ENCODE measurements at regions of chr5 and their contacts with region 1.

Region 1: DNA sequence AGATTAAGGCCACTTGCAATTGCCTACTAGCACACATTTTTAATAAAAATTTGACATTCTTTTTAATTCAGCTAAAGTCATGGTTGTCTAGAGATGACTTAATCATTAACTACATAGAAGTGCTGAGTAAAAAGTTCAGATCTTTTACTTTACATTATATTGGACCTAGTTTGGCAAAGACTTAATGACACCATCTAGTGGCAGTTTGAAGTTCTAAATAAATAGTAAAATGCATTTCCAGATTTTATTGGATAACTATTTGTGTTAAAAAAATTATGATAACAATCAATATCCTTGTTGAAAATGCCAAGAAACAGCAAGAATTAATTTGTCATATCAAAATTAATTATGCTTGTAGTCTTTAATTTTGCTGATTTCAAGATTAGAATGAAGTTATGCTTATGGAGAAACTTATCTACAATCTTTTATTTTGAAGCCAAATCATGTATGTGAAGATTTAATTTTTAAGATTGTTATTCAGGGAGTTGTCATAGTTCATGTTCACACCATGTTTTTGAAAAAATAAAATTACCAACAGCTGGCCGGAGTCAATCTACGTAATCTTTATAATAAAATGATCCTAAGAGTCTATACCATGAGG is 69.6 kb upstream of the PJA2 start:
- DNase-seq: peak in 2 of 9 donors; percentile 6 to 15
- ATAC-seq: no peak
- H3K4me3 ChIP-seq: no peak overlapping the region
- H3K4me3 Mint-ChIP-seq: no peak overlapping the region
- H3K27ac ChIP-seq: no peak overlapping the region
- H3K27ac Mint-ChIP-seq: no peak overlapping the region
- H3K4me1 ChIP-seq: no peaks in the 10 kb centered on the region
- H3K4me1 Mint-ChIP-seq: peaks cover 0 to 3% (median 0%) of the 10 kb centered on the region in 7 donors
- H3K27me3 ChIP-seq: no peaks in the 10 kb centered on the region
- H3K27me3 Mint-ChIP-seq: peaks cover 0 to 14% (median 9%) of the 10 kb centered on the region in 5 donors

Region 2: DNA sequence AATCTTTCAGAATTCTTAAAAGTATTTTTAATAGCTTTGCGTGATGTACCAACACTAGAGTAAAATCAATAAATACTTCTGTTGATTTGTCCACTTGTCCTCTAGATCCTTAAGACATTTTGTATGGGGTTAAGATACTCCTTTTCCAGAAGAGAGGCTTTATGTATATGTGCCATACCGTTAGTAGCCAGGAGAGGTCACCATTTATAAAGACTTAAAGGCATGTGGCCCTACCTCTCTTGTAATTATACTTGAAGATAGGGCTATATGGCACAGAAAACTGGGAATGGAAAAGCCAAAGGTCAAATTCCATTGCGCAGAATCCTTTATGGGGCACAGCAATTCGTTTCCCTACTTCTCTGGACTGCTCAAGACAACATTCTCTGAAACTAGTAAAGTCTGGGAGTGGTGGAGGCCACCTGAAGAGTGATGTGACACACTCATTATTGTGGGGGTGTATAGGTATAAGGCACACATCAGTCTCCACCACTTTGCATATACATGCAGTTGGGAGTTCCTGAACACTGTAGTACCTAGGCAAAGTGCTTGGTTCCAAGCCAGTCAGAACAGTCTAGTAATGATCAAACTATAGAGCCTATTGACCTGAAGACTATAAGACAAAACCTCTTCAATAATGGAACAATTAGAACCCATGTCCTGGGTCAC is 957.4 kb before region 1 on chr5:
- CTCF ChIA-PET with region 1: interaction called, 3 read pairs
- POLR2A ChIA-PET with region 1: no interaction called
- intact Hi-C with region 1: loop called (anchors 1 to 10 kb)
- DNase-seq: peak in 5 of 9 donors; percentile 4 to 29 (median 16)
- ATAC-seq: peak; percentile 73
- H3K4me3 ChIP-seq: no peak overlapping the region
- H3K4me3 Mint-ChIP-seq: no peak overlapping the region
- H3K27ac ChIP-seq: no peak overlapping the region
- H3K27ac Mint-ChIP-seq: no peak overlapping the region
- H3K4me1 ChIP-seq: no peaks in the 10 kb centered on the region
- H3K4me1 Mint-ChIP-seq: peaks cover 0 to 3% (median 0%) of the 10 kb centered on the region in 7 donors
- H3K27me3 ChIP-seq: no peaks in the 10 kb centered on the region
- H3K27me3 Mint-ChIP-seq: peaks cover 0 to 21% (median 13%) of the 10 kb centered on the region in 5 donors

Region 3: GRCh38 chr5:108642167-108642906 is 837.0 kb before region 1 on chr5:
- CTCF ChIA-PET with region 1: no interaction called
- POLR2A ChIA-PET with region 1: no interaction called
- intact Hi-C with region 1: loop called (anchors 1 to 2 kb)
- DNase-seq: peak in 8 of 9 donors; percentile 16 to 52 (median 32)
- ATAC-seq: peak; percentile 83
- H3K4me3 ChIP-seq: no peak overlapping the region
- H3K4me3 Mint-ChIP-seq: peak overlapping the region in 4 of 10 donors; percentile 4 to 73 (median 34)
- H3K27ac ChIP-seq: no peak overlapping the region
- H3K27ac Mint-ChIP-seq: peak overlapping the region in 1 of 9 donors; percentile 33
- H3K4me1 ChIP-seq: no peaks in the 10 kb centered on the region
- H3K4me1 Mint-ChIP-seq: peaks cover 0 to 4% (median 3%) of the 10 kb centered on the region in 7 donors
- H3K27me3 ChIP-seq: no peaks in the 10 kb centered on the region
- H3K27me3 Mint-ChIP-seq: peaks cover 0 to 8% (median 4%) of the 10 kb centered on the region in 5 donors

Region 4: GRCh38 chr5:108681079-108681921 is 798.1 kb before region 1 on chr5:
- CTCF ChIA-PET with region 1: no interaction called
- POLR2A ChIA-PET with region 1: no interaction called
- intact Hi-C with region 1: loop called (anchors 1 to 2 kb)
- DNase-seq: peak in 6 of 9 donors; percentile 23 to 58 (median 44)
- ATAC-seq: peak; percentile 88
- H3K4me3 ChIP-seq: no peak overlapping the region
- H3K4me3 Mint-ChIP-seq: no peak overlapping the region
- H3K27ac ChIP-seq: no peak overlapping the region
- H3K27ac Mint-ChIP-seq: no peak overlapping the region
- H3K4me1 ChIP-seq: no peaks in the 10 kb centered on the region
- H3K4me1 Mint-ChIP-seq: no peaks in the 10 kb centered on the region
- H3K27me3 ChIP-seq: no peaks in the 10 kb centered on the region
- H3K27me3 Mint-ChIP-seq: peaks cover 0 to 9% (median 0%) of the 10 kb centered on the region in 5 donors

Region 5: DNA sequence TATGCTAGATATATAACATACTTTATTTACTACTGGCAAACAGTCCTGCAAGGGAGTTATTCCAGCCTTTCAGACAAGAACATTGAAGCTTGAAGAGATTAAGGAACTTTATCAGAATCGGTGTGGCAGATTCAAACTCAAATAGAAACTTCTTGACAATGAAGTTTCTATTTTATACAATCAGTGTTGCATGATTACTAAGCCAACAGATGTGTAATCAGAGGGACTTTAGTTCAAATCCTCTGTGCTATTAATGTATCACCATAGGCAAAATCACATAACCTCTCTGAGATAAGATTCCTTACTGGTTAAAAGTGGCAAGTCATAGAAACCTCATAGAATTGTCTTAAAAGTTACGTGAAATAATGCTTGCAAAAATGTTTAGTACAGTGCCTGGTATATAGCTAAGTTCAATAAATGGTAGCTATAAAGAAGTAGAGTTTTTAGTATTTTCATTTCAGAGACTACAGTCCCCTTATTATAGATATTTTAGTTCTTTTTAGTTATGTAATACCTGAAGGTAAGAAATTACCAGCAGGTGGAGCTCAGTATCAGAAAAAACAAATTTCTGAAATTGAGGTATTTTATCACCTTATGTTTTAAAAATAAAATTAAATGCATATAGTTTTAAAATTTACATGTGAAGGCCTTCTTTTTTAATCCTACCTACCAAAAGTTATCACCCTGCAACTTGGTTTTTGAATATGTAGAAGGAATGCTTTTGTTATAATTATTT is 559.6 kb before region 1 on chr5:
- CTCF ChIA-PET with region 1: no interaction called
- POLR2A ChIA-PET with region 1: no interaction called
- intact Hi-C with region 1: loop called (anchors 1 to 10 kb)
- DNase-seq: peak in 2 of 9 donors; percentile 0 to 3
- ATAC-seq: no peak
- H3K4me3 ChIP-seq: no peak overlapping the region
- H3K4me3 Mint-ChIP-seq: no peak overlapping the region
- H3K27ac ChIP-seq: no peak overlapping the region
- H3K27ac Mint-ChIP-seq: no peak overlapping the region
- H3K4me1 ChIP-seq: no peaks in the 10 kb centered on the region
- H3K4me1 Mint-ChIP-seq: peaks cover 0 to 5% (median 0%) of the 10 kb centered on the region in 7 donors
- H3K27me3 ChIP-seq: no peaks in the 10 kb centered on the region
- H3K27me3 Mint-ChIP-seq: no peaks in the 10 kb centered on the region

Region 6: GRCh38 chr5:109439590-109439989 is 39.8 kb before region 1 on chr5:
- CTCF ChIA-PET with region 1: no interaction called
- POLR2A ChIA-PET with region 1: no interaction called
- intact Hi-C with region 1: no loop called
- DNase-seq: no peak
- ATAC-seq: no peak
- H3K4me3 ChIP-seq: no peak overlapping the region
- H3K4me3 Mint-ChIP-seq: no peak overlapping the region
- H3K27ac ChIP-seq: no peak overlapping the region
- H3K27ac Mint-ChIP-seq: no peak overlapping the region
- H3K4me1 ChIP-seq: no peaks in the 10 kb centered on the region
- H3K4me1 Mint-ChIP-seq: no peaks in the 10 kb centered on the region
- H3K27me3 ChIP-seq: no peaks in the 10 kb centered on the region
- H3K27me3 Mint-ChIP-seq: peaks cover 0 to 9% (median 0%) of the 10 kb centered on the region in 5 donors

Region 7: GRCh38 chr5:109900911-109901627 is 421.7 kb after region 1 on chr5:
- CTCF ChIA-PET with region 1: no interaction called
- POLR2A ChIA-PET with region 1: no interaction called
- intact Hi-C with region 1: no loop called
- DNase-seq: no peak
- ATAC-seq: no peak
- H3K4me3 ChIP-seq: no peak overlapping the region
- H3K4me3 Mint-ChIP-seq: no peak overlapping the region
- H3K27ac ChIP-seq: no peak overlapping the region
- H3K27ac Mint-ChIP-seq: no peak overlapping the region
- H3K4me1 ChIP-seq: no peaks in the 10 kb centered on the region
- H3K4me1 Mint-ChIP-seq: peaks cover 0 to 22% (median 8%) of the 10 kb centered on the region in 7 donors
- H3K27me3 ChIP-seq: no peaks in the 10 kb centered on the region
- H3K27me3 Mint-ChIP-seq: peaks cover 0 to 4% (median 0%) of the 10 kb centered on the region in 5 donors

Measured in naive thymus-derived CD4-positive, alpha-beta T cell (primary cell).